HCT116 (cell line): ENCODE measurements at regions of chr22 and their contacts with region 1.

Region 1: DNA sequence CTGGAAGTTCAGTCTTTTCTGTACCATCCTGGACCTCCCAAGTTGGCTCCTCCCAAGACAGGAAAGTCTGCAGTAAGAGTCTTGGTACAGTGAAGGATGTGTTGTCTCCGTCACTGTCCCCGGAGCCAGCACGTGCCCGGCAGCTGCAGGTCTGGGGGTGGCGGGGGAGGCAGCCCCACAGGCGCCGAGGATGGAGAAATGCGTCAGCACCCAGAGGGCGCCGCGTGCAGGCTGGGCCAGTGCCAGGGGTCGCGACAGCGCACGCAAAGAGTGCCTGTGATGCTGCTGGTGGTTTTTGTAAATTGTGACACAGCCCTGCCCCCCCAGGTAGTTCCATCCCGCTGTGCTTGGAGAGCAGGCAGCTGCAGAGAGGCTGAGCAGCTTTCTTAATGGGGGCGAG is 1200.5 kb downstream of the BRD1 start:
- DNase-seq: no peak
- ATAC-seq: no peak
- H3K4me3 ChIP-seq: no peak overlapping the region
- H3K27ac ChIP-seq: no peak overlapping the region
- H3K4me1 ChIP-seq: no peaks in the 10 kb centered on the region
- H3K27me3 ChIP-seq: peaks cover 10% of the 10 kb centered on the region; the same call in 1 of the 2 replicates
- CTCF ChIP-seq: no peak
- POLR2A ChIP-seq: no peak
- RAD21 ChIP-seq: no peak

Region 2: DNA sequence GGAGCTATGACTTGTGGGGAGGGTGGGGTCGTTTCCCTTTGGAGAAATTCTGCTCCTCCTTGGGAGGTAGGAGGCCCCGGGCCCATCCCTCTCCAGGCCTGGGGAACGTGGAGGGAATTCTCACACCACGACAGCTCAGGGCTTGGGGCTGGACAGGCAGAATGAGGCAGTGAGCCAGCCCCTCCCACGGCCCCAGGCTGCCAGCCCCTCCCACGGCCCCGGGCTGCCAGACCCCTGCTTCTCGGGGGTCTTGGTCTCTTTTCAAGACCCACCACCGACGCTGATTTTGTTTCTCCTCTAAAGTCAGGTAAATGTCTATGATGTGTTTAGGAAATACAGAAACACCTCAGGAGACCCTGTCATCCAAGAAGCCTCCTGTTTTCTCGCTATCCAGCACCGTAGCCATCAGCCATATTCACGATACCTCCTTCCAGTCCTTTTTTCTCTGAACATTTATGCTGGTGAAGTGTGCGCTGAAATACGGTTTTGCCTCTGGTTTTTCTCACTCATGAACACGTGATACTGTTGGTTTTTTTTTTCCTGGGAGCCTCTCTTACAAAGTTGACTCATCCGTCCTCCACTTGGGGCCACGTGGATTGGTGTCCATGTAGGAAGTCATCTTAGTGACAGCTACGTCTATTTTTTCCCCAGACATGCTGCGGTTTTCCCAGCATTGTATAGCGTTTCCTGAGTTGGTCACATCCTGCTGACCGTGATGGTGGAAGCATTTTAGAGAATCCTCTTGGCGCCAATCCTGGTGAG is 19.1 kb before region 1 on chr22:
- CTCF ChIA-PET with region 1: no interaction called
- POLR2A ChIA-PET with region 1: no interaction called
- RAD21 ChIA-PET with region 1: no interaction called
- intact Hi-C with region 1: loop called (anchors 1 kb)
- DNase-seq: no peak
- ATAC-seq: no peak
- H3K4me3 ChIP-seq: no peak overlapping the region
- H3K27ac ChIP-seq: no peak overlapping the region
- H3K4me1 ChIP-seq: peaks cover 0 to 7% of the 10 kb centered on the region in 2 experiments; a peak in 1 of 4 replicates
- H3K27me3 ChIP-seq: no peaks in the 10 kb centered on the region
- CTCF ChIP-seq: no peak
- POLR2A ChIP-seq: no peak
- RAD21 ChIP-seq: no peak

Region 3: DNA sequence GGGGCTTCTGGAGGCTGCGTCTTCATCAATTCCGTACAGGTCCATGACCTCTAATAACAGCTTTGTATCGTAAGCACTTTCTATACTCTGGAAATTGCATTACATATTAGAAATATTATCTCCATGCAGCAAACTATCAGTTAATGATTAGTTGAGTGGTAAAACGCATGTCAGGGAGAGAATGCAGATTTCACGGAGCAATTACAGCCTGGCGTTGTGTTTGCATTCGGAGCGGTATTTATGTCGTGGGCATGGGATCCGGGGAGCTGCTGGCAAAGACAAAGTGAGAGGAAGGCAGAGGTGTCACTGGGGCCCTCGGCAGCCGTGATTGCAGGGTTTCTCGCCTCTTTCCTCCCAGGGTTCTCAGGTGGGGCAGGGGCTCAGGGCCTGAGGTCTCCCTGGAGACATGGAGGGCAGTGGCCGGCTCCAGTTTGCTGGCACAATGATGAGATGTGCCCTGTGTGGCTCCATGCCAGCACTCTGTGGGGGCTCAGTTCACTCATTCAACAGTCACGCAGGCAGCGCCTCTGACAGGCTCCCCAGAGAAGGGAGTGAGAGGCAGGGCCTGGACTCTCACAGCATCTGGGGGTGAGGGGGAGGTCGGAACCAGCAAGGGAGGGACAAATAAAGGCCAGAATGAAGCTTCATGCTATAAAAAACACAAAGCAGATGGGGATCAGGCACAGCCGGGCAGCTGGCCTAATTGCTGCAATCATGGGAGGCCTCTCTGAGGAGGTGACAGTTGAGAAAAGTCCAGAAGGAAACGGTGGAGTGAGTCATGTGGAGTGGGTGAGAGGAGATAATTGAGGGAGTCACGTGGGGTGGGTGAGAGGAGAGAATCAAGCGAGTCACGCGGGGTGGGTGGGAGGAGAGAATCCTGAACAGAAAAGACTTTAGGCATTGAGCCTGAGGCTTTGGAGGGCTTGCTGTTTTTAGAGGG is 197.8 kb after region 1 on chr22:
- CTCF ChIA-PET with region 1: no interaction called
- POLR2A ChIA-PET with region 1: no interaction called
- RAD21 ChIA-PET with region 1: no interaction called
- intact Hi-C with region 1: no loop called
- DNase-seq: no peak
- ATAC-seq: no peak
- H3K4me3 ChIP-seq: no peak overlapping the region
- H3K27ac ChIP-seq: no peak overlapping the region
- H3K4me1 ChIP-seq: no peaks in the 10 kb centered on the region
- H3K27me3 ChIP-seq: no peaks in the 10 kb centered on the region
- CTCF ChIP-seq: no peak
- POLR2A ChIP-seq: no peak
- RAD21 ChIP-seq: no peak